ENCODE measurements at regions of chr6 and their contacts with region 1.

Region 1: GRCh38 chr6:30672445-30673253 is at the start of gene DHX16:
- DNase-seq: peak; percentile 84 to 89 (median 87)
- H3K4me3 ChIP-seq: peak within 1 kb of the TSS; percentile 89 to 95
- H3K4me3 Mint-ChIP-seq: peak within 1 kb of the TSS; percentile 80 to 94 (median 90)
- H3K27ac ChIP-seq: peak within 1 kb of the TSS; percentile 77
- H3K27ac Mint-ChIP-seq: peak within 1 kb of the TSS; percentile 69 to 97 (median 94)
- H3K4me1 ChIP-seq: peaks cover 20% of the 10 kb centered on the region
- H3K4me1 Mint-ChIP-seq: peaks cover 19 to 51% (median 35%) of the 10 kb centered on the region in 4 donors
- H3K27me3 ChIP-seq: no peaks in the 10 kb centered on the region
- H3K27me3 Mint-ChIP-seq: no peaks in the 10 kb centered on the region
- total RNA-seq, gene DHX16: 53.4 to 54.6 TPM

Region 2: GRCh38 chr6:30453508-30454116 is 219.0 kb before region 1 on chr6:
- CTCF ChIA-PET with region 1: no interaction called
- POLR2A ChIA-PET with region 1: interaction called, 3 read pairs
- intact Hi-C with region 1: loop called (anchors 1 kb)
- DNase-seq: peak; percentile 77 to 84 (median 81)
- H3K4me3 ChIP-seq: peak overlapping the region in 1 of 2 donors; percentile 28
- H3K4me3 Mint-ChIP-seq: peak overlapping the region; percentile 52 to 77 (median 62)
- H3K27ac ChIP-seq: no peak overlapping the region
- H3K27ac Mint-ChIP-seq: peak overlapping the region in 1 of 7 donors; percentile 17
- H3K4me1 ChIP-seq: peaks cover 47% of the 10 kb centered on the region
- H3K4me1 Mint-ChIP-seq: peaks cover 31 to 54% (median 43%) of the 10 kb centered on the region in 4 donors
- H3K27me3 ChIP-seq: peaks cover 80% of the 10 kb centered on the region
- H3K27me3 Mint-ChIP-seq: peaks cover 50 to 56% of the 10 kb centered on the region in 2 donors

Region 3: DNA sequence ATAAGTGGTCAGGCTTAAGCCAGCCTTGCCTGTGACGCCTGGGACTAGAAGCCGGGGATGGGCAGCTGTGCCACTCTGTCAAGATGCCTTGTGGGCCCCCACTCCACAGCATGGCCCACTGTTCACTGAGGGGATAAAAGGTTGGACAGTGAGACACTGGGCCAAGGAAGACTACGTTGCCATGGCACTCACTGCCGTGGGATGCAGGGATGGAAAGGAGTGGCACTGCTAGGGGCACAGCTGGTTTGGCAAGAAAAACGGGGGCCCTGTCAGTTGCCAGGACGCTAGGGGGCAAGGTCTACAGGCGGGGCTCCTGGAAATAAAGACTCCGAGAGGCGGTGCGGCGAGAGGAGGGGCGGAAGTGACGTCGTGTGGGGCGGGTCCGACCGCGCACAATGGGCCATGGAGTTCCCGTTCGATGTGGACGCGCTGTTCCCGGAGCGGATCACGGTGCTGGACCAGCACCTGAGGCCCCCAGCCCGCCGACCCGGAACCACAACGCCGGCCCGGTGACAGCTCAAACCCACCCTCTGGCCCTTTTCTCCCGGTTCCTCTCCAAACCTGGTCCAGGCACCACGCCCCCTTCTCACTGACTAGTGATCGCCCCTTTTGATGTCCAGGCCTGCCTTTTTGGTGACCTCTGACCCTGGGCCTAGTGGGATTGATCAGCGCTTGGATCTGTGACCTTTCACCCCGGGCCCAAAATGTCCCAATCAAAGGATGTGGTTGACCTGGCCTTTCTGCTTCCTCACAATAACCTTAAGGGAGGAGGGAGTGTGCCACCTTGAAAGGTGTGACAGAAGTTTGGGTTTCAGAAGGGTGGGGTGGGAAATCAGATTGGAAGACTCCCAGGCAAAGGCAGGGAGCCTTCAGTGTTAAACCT is 45.9 kb before region 1 on chr6 and contains the start of gene ATAT1:
- CTCF ChIA-PET with region 1: interaction called, 3 read pairs
- POLR2A ChIA-PET with region 1: interaction called, 4 read pairs
- intact Hi-C with region 1: loop called (anchors 1 kb)
- DNase-seq: peak; percentile 85 to 94 (median 86)
- H3K4me3 ChIP-seq: peak within 1 kb of the TSS; percentile 5 to 78
- H3K4me3 Mint-ChIP-seq: peak within 1 kb of the TSS; percentile 91 to 95 (median 92)
- H3K27ac ChIP-seq: peak within 1 kb of the TSS; percentile 89
- H3K27ac Mint-ChIP-seq: peak within 1 kb of the TSS; percentile 91 to 99 (median 97)
- H3K4me1 ChIP-seq: peaks cover 14% of the 10 kb centered on the region
- H3K4me1 Mint-ChIP-seq: peaks cover 18 to 30% (median 24%) of the 10 kb centered on the region in 4 donors
- H3K27me3 ChIP-seq: no peaks in the 10 kb centered on the region
- H3K27me3 Mint-ChIP-seq: no peaks in the 10 kb centered on the region
- total RNA-seq, gene ATAT1: 8.3 to 9.4 TPM

Region 4: DNA sequence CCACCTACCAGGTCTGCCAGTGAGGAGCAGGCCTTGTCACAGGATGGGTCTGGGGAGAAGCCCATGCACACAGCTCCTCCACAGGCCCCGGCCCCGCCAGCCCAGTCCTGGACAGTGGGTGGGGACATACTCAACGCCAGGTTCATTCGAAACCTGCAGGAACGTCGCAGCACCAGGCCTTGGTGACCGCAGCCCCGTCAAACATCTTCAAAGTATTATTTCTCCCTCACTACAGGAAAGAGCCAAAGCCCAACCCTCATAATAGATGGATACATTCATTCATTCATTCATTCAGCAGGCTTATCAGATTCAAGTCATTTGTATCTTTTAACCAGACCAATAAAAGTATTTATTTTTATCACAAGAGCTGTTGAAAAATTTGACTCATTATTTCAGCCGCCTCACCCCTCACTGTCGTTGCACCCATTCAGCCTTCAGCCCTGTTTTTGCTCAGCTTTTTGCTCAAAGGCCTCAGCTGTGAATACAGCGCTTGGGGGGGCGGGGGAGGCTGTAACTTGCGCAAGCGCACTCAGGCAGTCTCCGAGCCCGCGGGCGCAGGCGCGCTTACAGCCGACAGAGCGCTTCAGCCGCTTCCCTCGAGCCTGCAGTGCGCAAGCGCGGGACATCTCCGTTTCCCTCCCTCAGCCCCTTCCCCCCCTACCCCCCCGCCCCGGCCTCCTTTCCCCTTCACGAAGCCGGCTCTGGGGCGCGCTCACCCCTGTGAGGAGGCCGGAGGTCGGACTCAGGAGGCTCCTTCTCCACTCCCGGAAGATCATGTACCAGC is 26.0 kb before region 1 on chr6 and contains the start of gene C6orf136:
- CTCF ChIA-PET with region 1: interaction called, 4 read pairs
- POLR2A ChIA-PET with region 1: interaction called, 5 read pairs
- intact Hi-C with region 1: loop called (anchors 1 kb)
- DNase-seq: peak; percentile 86 to 94 (median 93)
- H3K4me3 ChIP-seq: peak within 1 kb of the TSS; percentile 74 to 91
- H3K4me3 Mint-ChIP-seq: peak within 1 kb of the TSS; percentile 85 to 92 (median 89)
- H3K27ac ChIP-seq: peak within 1 kb of the TSS; percentile 89
- H3K27ac Mint-ChIP-seq: peak within 1 kb of the TSS; percentile 85 to 95 (median 92)
- H3K4me1 ChIP-seq: peaks cover 20% of the 10 kb centered on the region
- H3K4me1 Mint-ChIP-seq: peaks cover 17 to 29% (median 22%) of the 10 kb centered on the region in 4 donors
- H3K27me3 ChIP-seq: no peaks in the 10 kb centered on the region
- H3K27me3 Mint-ChIP-seq: no peaks in the 10 kb centered on the region
- total RNA-seq, gene C6orf136: 29.3 to 35.0 TPM

Region 5: GRCh38 chr6:30769088-30769852 is 96.6 kb after region 1 on chr6:
- CTCF ChIA-PET with region 1: no interaction called
- POLR2A ChIA-PET with region 1: no interaction called
- intact Hi-C with region 1: no loop called
- DNase-seq: peak; percentile 41 to 78 (median 49)
- H3K4me3 ChIP-seq: peak overlapping the region in 1 of 2 donors; percentile 28
- H3K4me3 Mint-ChIP-seq: peak overlapping the region; percentile 61 to 83 (median 72)
- H3K27ac ChIP-seq: peak overlapping the region; percentile 18
- H3K27ac Mint-ChIP-seq: peak overlapping the region; percentile 23 to 92 (median 88)
- H3K4me1 ChIP-seq: peaks cover 40% of the 10 kb centered on the region
- H3K4me1 Mint-ChIP-seq: peaks cover 36 to 67% (median 52%) of the 10 kb centered on the region in 4 donors
- H3K27me3 ChIP-seq: no peaks in the 10 kb centered on the region
- H3K27me3 Mint-ChIP-seq: no peaks in the 10 kb centered on the region